Left cardiac atrium (tissue), 4 donors: ENCODE measurements at regions of chr4 and their contacts with region 1.

Region 1: DNA sequence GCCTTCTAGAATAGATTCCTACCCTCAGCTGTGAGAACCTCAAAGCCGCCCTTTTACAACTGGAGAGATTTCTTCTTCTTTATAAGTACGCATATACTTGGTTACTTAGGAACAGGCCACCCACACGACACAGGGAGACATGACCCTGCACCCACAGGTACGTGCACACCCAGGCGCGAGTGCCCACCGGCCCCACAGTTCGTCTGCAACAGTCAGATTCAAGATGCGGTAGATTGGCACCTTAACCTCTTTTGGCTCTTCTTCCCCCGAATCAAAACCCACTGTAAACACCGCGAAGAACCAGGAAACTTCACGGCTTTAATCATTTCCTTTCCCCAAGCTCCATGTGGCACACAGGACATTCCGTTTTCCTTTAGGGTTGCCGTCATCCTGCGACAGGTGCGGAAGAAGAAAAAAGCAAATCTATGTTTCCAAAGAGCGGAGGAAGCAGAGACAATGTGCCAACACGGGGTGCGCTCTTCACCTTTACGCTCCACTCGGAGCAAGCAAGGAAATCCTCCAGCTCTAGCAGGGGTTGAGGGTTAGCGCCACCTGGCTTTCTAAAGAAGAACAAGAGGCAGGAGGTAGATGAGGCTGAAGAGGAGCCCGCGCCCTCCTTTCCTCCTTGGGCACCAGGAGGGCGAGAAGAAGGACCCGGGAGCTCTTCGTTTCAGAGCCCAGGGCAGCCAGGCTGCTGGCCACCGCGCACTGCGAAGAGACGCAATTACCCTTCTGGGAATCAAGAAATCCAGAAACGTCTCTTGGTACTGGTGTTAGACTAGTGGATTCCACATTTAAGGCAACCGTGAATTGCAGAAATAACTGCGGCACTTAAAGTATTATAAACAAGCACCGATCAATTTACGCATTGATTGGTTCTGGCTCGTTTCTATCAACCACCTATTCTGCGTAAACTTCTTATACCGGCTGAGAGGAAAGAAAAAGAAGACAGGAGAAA is 35.7 kb downstream of the HAND2 start:
- DNase-seq: peak; percentile 70
- ATAC-seq: peak; percentile 86 to 91

Region 2: DNA sequence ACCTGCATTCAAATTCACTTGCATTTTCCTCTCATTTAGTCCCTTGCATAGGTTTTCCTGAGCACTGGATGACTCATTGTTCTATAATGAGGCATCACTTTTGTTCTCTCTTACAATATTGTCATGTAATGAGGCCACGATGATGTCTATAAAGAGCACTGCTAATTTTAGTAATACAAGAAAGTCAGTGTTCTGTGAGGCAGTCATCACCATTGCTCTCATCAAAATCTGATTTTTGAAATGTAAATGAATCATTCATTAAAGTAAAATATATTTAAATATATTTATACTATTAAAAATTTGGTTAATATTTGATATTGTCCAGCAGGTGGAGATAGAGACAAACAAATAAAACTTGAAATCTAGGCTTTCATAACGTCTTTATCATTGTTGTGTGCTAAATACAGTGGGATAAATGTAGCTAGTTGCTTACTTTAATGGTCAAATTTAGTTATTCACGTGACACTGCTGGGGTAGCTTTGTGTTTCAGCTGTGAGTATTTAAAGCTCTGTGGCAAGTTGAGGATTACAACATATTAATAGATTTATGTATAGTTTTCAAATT is 175.6 kb before region 1 on chr4:
- intact Hi-C with region 1: loop called in 1 of 2 experiments (anchors 5 kb)
- DNase-seq: no peak
- ATAC-seq: peak; percentile 27 to 44

Region 3: DNA sequence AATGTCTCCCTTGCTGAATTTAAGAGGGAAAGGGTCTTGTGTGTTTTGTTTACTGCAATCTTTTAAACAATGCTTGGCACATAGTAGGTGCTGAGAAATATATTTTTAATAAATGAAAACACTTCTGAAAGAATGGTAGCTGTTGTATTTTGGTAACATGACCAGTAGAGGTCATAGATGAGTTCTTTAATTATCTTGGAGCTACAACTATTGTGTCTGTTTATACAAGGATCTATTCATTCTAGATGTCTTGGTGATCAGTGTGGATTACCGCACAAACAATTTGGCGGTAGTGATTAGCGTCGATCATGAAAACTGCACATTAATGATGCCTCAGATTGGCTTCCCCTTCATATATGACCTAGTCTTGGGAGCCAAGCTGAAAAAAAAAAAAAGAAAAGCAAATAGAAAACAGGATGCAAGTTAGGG is 74.0 kb before region 1 on chr4:
- intact Hi-C with region 1: loop called (anchors 1 to 5 kb)
- DNase-seq: no peak
- ATAC-seq: peak; percentile 20 to 46